ENCODE measurements at regions of chr10 and their contacts with region 1.

Region 1: DNA sequence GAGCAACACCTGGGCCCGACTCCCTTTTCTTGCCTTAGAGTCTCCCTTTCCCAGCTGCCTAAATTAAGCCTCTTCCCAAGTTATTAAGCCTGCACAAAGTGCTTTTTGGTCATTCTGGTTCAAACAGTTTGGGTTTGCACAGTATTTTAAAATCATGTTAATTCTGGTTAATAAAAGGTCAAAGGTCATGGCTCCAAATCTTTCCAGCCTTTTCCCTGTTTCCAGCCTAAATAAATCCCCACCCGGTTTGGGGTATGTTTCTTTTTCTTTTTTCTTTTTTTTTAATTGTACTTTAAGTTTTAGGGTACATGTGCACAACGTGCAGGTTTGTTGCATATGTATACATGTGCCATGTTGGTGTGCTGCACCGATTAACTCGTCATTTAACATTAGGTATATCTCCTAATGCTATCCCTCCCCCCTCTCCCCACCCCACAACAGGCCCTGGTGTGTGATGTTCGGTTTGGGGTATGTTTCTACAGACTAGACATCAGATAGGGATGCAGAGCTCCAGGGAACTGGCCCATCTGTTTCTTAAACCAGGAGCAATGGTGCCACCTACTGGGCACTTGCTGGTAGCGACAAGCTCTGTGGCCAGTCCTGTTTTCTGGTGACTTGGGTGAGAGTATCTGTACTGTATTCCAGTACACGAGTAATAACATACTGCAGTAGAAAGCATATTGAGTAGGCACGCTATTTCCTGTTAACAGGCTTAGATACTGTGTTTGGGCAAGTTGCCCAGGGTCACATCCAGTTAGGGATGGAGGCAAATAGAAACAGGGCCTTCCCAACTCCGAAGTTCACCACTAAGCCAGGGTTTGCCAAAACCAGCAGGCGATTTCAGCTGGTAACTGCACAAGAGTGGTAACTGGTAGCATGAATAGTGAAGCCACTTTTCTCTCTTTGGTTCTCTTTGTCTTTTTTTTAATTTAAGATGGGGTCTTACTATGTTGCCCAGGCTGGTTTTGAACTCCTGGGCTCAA is 60.6 kb upstream of the TRIM8 start:
- DNase-seq: peak; percentile 83 to 96 (median 90)
- H3K4me3 ChIP-seq: no peak overlapping the region
- H3K27ac ChIP-seq: peak overlapping the region in 6 of 59 donors; percentile 5 to 71 (median 24)
- H3K27me3 ChIP-seq: no peaks in the 10 kb centered on the region
- CTCF ChIP-seq: peak; percentile 68 to 96 (median 90)

Region 2: DNA sequence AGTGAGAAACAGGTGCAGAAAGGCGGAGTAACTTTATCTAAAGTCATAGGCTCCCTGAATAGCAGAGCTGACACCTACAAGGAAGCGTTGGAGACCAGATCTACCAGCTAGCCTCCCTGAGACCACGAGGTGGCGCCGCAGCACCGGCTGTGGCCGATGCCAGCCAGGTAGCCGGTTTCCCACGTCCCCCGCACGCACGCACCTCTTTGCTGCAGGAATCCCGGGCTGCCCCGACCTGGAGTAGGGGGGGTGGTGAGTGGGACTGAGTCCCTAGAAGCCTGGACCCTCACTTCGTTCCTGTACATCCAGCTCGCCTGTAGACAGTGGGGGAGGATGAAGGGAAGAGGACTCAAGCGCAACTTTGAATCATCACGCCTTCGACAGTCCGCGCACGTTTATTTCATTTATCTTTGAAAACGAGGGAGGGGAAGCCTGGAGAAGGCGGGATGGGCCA is 353.9 kb before region 1 on chr10:
- intact Hi-C with region 1: loop called in 1 of 2 experiments (anchors 10 kb)
- DNase-seq: peak; percentile 69 to 88 (median 80)
- H3K4me3 ChIP-seq: peak overlapping the region in 58 of 59 donors; percentile 12 to 62 (median 44)
- H3K27ac ChIP-seq: no peak overlapping the region
- H3K27me3 ChIP-seq: peaks cover 0 to 53% (median 28%) of the 10 kb centered on the region in 45 donors
- CTCF ChIP-seq: peak; percentile 60 to 98 (median 92)